ENCODE measurements at regions of chr3 and their contacts with region 1.

Region 1: DNA sequence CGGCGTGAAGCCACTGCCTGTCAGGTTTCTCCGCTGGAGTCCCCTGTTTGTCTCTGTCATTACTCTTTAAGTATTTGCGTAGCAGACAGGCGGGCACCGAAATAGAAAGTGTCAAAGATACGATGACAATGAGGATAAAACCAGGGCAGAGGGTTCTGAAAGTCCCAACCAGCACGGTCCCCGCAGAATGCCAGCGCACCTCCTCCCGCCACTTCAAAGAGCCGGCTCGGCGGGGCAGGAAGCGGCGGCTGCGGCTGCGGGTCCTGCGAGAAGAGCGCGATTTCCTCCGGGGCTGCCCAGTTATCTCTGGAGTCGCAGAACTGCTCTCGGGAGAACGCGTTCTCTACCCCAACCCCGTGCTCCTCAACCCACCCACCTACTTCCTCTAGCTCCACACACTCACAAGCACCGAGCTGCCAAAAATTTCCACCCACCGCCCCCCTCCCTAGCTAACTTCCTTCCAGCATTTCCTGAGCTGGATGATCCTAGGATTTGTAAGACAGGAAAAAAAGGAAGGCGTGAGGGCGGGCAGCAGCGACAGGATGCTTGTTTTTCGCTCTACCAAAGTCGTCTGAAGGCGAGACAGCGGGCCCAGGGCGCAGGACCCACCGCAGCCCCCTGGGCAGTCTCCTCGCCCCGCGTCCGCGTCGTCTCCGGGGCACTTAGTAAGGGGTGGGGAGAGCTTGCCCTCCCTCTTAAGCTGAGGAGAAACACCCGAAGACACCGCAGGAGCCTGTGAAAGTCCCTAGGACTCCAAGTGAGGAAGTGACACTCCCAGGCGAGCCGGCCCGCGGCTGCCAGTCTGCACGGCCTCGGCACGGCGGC is at the start of gene ARHGAP31:
- DNase-seq: peak; percentile 89
- ATAC-seq: peak; percentile 77
- total RNA-seq, gene ARHGAP31: 42.8 TPM

Region 2: GRCh38 chr3:119279101-119279554 is 15.0 kb before region 1 on chr3:
- intact Hi-C with region 1: loop called (anchors 1 kb)
- DNase-seq: peak; percentile 79
- ATAC-seq: peak; percentile 83

Region 3: GRCh38 chr3:119322835-119323722 is 29.0 kb after region 1 on chr3:
- intact Hi-C with region 1: loop called (anchors 2 kb)
- DNase-seq: peak; percentile 94
- ATAC-seq: peak; percentile 93

Region 4: DNA sequence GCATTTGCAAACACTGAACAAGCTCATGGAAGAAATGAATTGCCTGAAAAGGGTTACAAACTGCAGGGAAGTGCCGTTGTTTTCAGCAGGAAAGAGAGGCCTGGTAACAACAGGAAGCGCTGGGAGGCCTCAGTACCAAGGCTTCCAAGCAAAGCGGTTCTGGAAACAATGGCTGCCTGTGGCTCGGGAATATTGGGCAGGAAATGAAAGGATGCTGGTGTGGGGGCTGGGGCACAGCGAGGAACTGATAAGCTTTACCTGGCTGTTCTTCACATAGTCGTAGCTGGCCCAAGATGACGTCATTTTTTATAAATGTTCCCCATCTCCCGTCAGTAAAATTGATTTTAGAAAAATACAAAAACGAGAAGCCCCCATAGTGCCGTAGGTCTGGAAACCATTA is 56.0 kb after region 1 on chr3:
- intact Hi-C with region 1: loop called (anchors 2 kb)
- DNase-seq: no peak
- ATAC-seq: peak; percentile 18

Region 5: GRCh38 chr3:119469381-119470189 is 175.5 kb after region 1 on chr3:
- intact Hi-C with region 1: loop called (anchors 5 kb)
- DNase-seq: peak; percentile 76
- ATAC-seq: no peak

Measured in Right ventricle myocardium inferior (tissue), 1 donor.